CD14-positive monocyte (primary cell): ENCODE measurements at regions of chr7 and their contacts with region 1.

Region 1: DNA sequence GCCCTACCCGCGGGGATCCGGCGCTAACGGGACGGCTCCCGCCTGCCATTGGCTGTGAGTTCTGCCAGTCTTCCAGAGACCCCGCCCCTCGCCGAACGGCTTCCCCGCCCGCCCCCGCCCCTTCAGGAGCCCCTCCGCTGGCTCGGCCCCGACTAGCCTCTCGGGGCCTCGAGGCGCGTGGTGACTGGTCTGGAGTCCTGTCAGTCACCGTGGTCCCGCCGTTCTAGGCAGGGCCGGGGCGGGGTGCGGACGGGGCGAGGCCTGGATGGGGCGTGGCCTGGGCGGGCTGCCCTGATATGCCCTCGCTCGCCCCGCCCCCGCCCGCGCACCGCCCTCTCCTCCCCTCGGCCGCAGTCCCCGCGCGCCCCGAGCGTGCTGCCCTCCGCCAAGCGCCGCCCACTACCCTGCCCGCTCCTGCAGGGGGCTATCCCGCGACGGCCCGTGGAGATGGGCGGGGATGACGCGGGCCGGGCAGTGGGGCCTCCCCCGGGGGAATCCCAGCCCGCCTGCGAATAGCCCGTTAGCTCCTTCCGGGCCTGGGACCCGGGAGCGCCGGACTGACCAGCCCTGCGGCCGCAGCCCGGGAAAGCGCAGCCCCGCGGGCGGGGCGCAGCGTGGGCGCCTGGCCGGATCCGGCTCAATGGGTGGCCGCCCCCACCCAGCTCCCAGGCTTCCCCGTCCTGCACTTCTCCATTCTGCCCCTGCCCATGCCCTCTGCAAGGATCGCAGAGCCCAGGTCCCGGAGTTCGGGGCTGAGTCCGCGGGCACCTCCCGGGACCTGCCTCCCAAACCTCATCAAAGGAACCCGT is 450 bp upstream of the HIP1 start:
- DNase-seq: peak; percentile 99
- H3K4me3 ChIP-seq: peak overlapping the region; percentile 80 to 95 (median 92)
- H3K4me3 Mint-ChIP-seq: peak overlapping the region; percentile 95 to 96
- H3K27ac ChIP-seq: peak overlapping the region; percentile 90 to 93
- H3K27ac Mint-ChIP-seq: peak overlapping the region; percentile 86 to 99 (median 98)
- H3K4me1 ChIP-seq: peaks cover 36 to 40% of the 10 kb centered on the region in 2 donors
- H3K4me1 Mint-ChIP-seq: peaks cover 34% of the 10 kb centered on the region
- H3K27me3 ChIP-seq: no peaks in the 10 kb centered on the region
- H3K27me3 Mint-ChIP-seq: peaks cover 1 to 8% (median 8%) of the 10 kb centered on the region in 3 donors
- CTCF ChIP-seq: no peak

Region 2: DNA sequence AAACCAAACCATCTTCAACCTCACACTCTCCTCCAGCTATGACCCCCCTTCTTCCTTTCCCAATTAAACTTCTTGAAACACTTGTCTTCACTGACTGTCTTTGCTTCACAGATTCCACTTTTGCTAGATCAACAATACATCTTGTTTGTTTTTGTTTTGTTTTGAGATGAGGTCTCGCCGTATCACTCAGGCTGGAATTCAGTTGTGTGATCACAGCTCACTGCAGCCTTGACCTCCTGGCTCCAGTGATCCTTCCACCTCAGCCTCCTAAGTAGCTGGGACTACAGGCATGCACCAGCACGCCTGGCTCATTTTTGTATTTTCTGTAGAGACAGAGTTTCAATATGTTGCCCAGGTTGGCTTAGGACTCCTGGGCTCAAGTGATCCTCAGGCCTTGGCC is 60.1 kb before region 1 on chr7:
- intact Hi-C with region 1: loop called (anchors 5 to 10 kb)
- DNase-seq: no peak
- H3K4me3 ChIP-seq: no peak overlapping the region
- H3K4me3 Mint-ChIP-seq: no peak overlapping the region
- H3K27ac ChIP-seq: no peak overlapping the region
- H3K27ac Mint-ChIP-seq: no peak overlapping the region
- H3K4me1 ChIP-seq: no peaks in the 10 kb centered on the region
- H3K4me1 Mint-ChIP-seq: peaks cover 14% of the 10 kb centered on the region
- H3K27me3 ChIP-seq: no peaks in the 10 kb centered on the region
- H3K27me3 Mint-ChIP-seq: peaks cover 0 to 8% (median 3%) of the 10 kb centered on the region in 3 donors
- CTCF ChIP-seq: no peak